Gastrocnemius medialis (tissue), 4 donors: ENCODE measurements at regions of chr10 and their contacts with region 1.

Region 1: DNA sequence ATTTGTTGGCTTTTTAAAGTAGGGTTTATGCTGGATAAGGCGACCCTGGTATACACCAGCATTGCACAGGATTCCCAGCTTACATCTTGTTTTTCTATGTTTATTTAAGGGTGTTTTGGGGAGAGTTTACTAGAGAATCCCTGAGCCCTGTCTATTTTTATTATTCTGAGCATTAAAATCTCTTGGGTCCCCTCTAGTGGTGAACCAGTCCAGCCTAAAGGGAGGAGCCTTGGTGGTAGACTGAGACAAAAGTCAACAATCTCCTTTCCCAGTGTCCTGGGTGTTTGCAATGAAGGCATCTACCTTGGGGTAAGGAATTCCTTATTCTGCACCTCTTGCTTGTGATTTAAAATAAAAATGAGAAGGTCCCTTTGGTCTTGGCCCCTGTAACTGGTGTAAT is 38.2 kb downstream of the ANTXRL start:
- DNase-seq: no peak
- ATAC-seq: no peak
- H3K4me3 ChIP-seq: no peak overlapping the region
- H3K27ac ChIP-seq: no peak overlapping the region
- H3K4me1 ChIP-seq: no peaks in the 10 kb centered on the region
- H3K27me3 ChIP-seq: no peaks in the 10 kb centered on the region
- CTCF ChIP-seq: peak in 1 of 5 experiments; percentile 24
- POLR2A ChIP-seq: no peak

Region 2: DNA sequence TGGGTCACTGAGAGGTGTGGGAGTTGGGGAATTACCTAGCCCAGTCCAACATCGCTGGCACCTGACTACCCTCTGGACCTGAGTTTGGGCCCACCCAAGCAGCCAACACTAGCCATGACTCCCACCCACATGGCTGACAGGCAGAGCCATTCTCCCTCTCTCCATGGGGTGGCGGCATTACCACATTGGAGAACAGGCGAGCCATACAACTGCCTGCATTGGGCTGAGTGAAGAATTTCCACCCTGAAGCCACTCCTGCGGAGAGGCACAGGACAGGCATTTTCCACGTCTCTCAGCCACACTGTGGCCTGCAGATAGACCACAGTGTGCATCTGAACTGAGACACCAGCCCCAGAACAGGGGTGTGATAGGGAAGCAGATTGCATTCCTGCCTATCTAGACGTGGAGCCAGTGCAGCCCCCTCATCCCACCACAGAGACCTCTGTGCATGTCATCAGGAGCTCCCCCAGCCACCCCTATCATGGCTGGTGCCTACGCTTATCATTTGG is 96.4 kb before region 1 on chr10:
- in situ Hi-C with region 1: loop called in 1 of 4 experiments (anchors 10 kb)
- intact Hi-C with region 1: no loop called
- DNase-seq: peak; percentile 25 to 33
- ATAC-seq: peak; percentile 77 to 86
- H3K4me3 ChIP-seq: no peak overlapping the region
- H3K27ac ChIP-seq: no peak overlapping the region
- H3K4me1 ChIP-seq: no peaks in the 10 kb centered on the region
- H3K27me3 ChIP-seq: no peaks in the 10 kb centered on the region
- CTCF ChIP-seq: peak; percentile 60 to 86 (median 68)
- POLR2A ChIP-seq: no peak